ENCODE measurements at regions of chr2 and their contacts with region 1.

Region 1: GRCh38 chr2:96138179-96139145 is at the start of gene ASTL:
- DNase-seq: peak; percentile 60 to 74 (median 69)
- H3K4me3 ChIP-seq: no peak within 1 kb of the TSS
- H3K4me3 Mint-ChIP-seq: peak within 1 kb of the TSS in 1 of 8 donors; percentile 10
- H3K27ac ChIP-seq: no peak within 1 kb of the TSS
- H3K27ac Mint-ChIP-seq: peak within 1 kb of the TSS in 6 of 7 donors; percentile 60 to 96 (median 72)
- H3K4me1 ChIP-seq: peaks cover 17% of the 10 kb centered on the region
- H3K4me1 Mint-ChIP-seq: peaks cover 13 to 35% (median 16%) of the 10 kb centered on the region in 4 donors
- H3K27me3 ChIP-seq: no peaks in the 10 kb centered on the region
- H3K27me3 Mint-ChIP-seq: no peaks in the 10 kb centered on the region
- total RNA-seq, gene ASTL: 1.3 TPM in 1 of 2 experiments, not detected in the other

Region 2: DNA sequence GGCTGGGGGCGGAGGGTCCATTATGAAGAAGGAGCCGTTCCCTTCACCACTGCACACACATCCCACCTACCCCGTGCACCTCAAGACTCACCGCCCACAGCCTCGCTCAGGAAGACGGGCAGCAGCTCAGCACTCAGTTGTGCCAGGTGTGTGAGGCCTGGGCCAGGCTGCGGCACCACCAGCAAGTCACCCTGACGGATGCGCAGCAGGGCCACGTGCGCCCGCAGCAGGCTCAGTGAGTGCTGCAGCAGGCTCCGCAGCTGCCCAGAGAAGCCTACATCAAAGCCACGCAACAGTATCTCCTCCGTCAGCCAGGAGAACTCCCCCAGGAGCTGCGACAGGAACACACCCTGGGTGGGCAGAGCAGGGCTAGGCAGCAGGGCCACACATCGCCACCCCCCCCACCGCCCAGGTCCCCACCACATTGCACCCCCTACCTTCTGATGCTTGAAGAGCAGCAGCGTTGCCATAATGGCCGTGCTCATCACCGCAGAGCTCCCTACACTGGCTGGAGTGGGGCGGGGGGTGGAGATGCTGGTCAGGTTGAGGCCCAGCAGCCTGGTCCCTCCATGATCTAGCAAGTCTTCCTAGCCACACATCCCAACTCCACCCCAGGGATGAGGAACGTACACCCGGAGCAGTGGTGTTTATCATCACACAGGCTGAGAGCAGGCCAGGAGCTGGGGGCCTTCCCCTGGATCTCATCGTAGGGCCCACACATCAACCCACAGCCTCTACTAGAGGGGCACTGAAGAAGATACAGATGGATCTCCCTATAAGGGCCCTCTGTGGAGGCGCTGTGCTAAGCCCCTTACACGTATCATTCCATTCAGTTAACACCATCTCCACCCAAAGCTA is 113.9 kb before region 1 on chr2:
- CTCF ChIA-PET with region 1: interaction called, 11 read pairs
- POLR2A ChIA-PET with region 1: no interaction called
- intact Hi-C with region 1: no loop called
- DNase-seq: no peak
- H3K4me3 ChIP-seq: no peak overlapping the region
- H3K4me3 Mint-ChIP-seq: no peak overlapping the region
- H3K27ac ChIP-seq: no peak overlapping the region
- H3K27ac Mint-ChIP-seq: no peak overlapping the region
- H3K4me1 ChIP-seq: no peaks in the 10 kb centered on the region
- H3K4me1 Mint-ChIP-seq: peaks cover 0 to 3% (median 2%) of the 10 kb centered on the region in 4 donors
- H3K27me3 ChIP-seq: no peaks in the 10 kb centered on the region
- H3K27me3 Mint-ChIP-seq: no peaks in the 10 kb centered on the region

Region 3: DNA sequence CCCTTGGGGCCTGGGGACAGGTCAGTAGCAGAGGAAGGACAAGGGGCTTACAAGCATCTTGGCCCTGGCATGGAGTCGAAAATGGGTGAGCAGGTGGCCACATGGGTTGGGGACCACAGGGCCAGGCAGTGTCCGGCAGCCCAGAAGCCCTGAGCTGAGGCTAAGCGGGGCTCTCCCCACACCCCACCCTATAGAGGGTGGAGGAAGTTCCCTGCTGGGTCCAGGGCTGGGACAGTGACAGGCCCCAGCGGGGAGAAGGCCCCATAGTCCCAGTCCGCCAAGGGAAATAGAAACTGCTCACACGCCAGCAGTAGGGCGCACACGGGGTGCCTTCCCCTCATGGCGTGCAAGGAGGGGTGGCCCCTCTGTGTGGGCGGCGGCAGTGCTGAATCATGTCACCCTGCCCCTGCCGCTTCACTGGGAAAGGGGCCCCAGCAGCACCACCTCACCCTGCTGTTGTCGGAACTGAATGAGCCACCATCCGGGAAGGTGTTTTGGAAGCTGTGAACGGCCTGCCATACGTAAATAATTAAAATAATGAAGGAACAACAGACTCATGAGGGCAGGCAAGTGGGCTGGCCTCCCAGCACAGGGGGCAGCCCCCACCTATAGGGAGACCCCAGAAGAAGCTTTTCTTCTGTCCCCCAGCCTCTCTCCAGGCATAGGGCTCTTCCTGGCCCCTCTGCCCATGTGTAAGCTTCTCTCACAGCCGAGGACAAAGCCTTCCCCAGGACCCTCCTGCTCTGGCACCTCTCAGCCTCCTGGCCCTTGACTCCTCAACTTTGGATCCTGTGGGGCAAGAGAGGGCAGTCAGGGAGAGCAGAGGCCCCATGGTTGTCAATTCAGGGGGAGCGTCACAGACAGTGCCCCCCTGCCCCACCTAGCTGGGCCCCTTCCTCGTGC is 19.4 kb after region 1 on chr2:
- CTCF ChIA-PET with region 1: interaction called, 43 read pairs
- POLR2A ChIA-PET with region 1: interaction called, 285 read pairs
- intact Hi-C with region 1: no loop called
- DNase-seq: peak; percentile 48 to 84 (median 58)
- H3K4me3 ChIP-seq: peak overlapping the region; percentile 4 to 9
- H3K4me3 Mint-ChIP-seq: peak overlapping the region; percentile 21 to 91 (median 68)
- H3K27ac ChIP-seq: peak overlapping the region; percentile 38
- H3K27ac Mint-ChIP-seq: peak overlapping the region; percentile 77 to 94 (median 88)
- H3K4me1 ChIP-seq: peaks cover 58% of the 10 kb centered on the region
- H3K4me1 Mint-ChIP-seq: peaks cover 42 to 78% (median 58%) of the 10 kb centered on the region in 4 donors
- H3K27me3 ChIP-seq: no peaks in the 10 kb centered on the region
- H3K27me3 Mint-ChIP-seq: no peaks in the 10 kb centered on the region

Region 4: DNA sequence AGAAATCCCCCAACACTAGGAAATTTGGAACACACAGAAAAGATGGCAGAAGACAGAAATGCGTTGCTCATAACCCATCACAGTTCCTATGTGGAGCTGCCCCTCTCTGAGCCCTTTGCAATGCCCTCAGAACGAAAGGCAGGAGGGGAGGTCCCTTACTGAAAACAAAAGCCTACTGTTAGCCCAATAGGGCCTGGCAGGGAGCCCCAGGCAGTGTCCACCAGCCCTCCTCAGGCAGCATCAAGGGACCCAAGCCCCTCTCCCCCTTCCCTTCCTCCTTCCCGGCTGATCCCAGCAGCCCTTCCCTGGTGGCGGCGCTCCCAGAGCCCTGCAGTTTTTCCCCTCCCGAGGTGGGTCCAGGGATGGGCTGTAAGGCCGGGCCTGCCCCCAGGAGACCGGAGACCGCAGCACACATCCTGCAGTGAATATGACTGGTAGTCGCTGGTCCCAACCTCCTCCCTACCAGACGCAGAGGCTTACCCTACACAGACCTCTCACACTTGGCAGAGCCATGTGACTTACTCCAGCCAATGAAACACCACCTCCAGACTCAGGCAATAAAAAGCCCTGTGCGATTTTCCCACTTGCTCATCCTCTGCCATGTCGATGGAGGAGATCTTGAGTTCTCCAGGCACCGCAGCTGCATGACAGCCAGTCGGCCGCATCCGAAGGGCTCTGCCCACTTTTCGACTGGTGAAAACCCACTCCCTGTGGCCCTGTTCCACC is 26.2 kb after region 1 on chr2:
- CTCF ChIA-PET with region 1: interaction called, 648 read pairs
- POLR2A ChIA-PET with region 1: interaction called, 285 read pairs
- intact Hi-C with region 1: no loop called
- DNase-seq: peak; percentile 57 to 74 (median 61)
- H3K4me3 ChIP-seq: peak overlapping the region; percentile 20 to 36
- H3K4me3 Mint-ChIP-seq: peak overlapping the region; percentile 48 to 86 (median 70)
- H3K27ac ChIP-seq: peak overlapping the region; percentile 58
- H3K27ac Mint-ChIP-seq: peak overlapping the region; percentile 93 to 98 (median 95)
- H3K4me1 ChIP-seq: peaks cover 42% of the 10 kb centered on the region
- H3K4me1 Mint-ChIP-seq: peaks cover 30 to 55% (median 43%) of the 10 kb centered on the region in 4 donors
- H3K27me3 ChIP-seq: no peaks in the 10 kb centered on the region
- H3K27me3 Mint-ChIP-seq: no peaks in the 10 kb centered on the region

Region 5: GRCh38 chr2:96180521-96180920 is 42.1 kb after region 1 on chr2:
- CTCF ChIA-PET with region 1: interaction called, 648 read pairs
- POLR2A ChIA-PET with region 1: interaction called, 113 read pairs
- intact Hi-C with region 1: no loop called
- DNase-seq: no peak
- H3K4me3 ChIP-seq: no peak overlapping the region
- H3K4me3 Mint-ChIP-seq: no peak overlapping the region
- H3K27ac ChIP-seq: no peak overlapping the region
- H3K27ac Mint-ChIP-seq: no peak overlapping the region
- H3K4me1 ChIP-seq: no peaks in the 10 kb centered on the region
- H3K4me1 Mint-ChIP-seq: peaks cover 0 to 5% (median 3%) of the 10 kb centered on the region in 4 donors
- H3K27me3 ChIP-seq: no peaks in the 10 kb centered on the region
- H3K27me3 Mint-ChIP-seq: no peaks in the 10 kb centered on the region

Measured in CD4-positive, alpha-beta memory T cell (primary cell).